Activated B cell treated with CpG ODN at 0.5 μM for 24 hours (primary cell): ENCODE measurements at regions of chr9 and their contacts with region 1.

Region 1: GRCh38 chr9:36664806-36665205 is 92.1 kb downstream of the MELK start:
- DNase-seq: no peak
- ATAC-seq: no peak
- H3K4me3 Mint-ChIP-seq: no peak overlapping the region
- H3K27ac Mint-ChIP-seq: no peak overlapping the region
- H3K4me1 Mint-ChIP-seq: peaks cover 12% of the 10 kb centered on the region
- H3K27me3 Mint-ChIP-seq: no peaks in the 10 kb centered on the region
- CTCF ChIP-seq: no peak

Region 2: GRCh38 chr9:36623280-36623679 is 41.5 kb before region 1 on chr9:
- CTCF ChIA-PET with region 1: no interaction called
- POLR2A ChIA-PET with region 1: no interaction called
- intact Hi-C with region 1: loop called (anchors 5 kb)
- DNase-seq: no peak
- ATAC-seq: no peak
- H3K4me3 Mint-ChIP-seq: no peak overlapping the region
- H3K27ac Mint-ChIP-seq: no peak overlapping the region
- H3K4me1 Mint-ChIP-seq: no peaks in the 10 kb centered on the region
- H3K27me3 Mint-ChIP-seq: no peaks in the 10 kb centered on the region
- CTCF ChIP-seq: no peak